ENCODE measurements at regions of chr10 and their contacts with region 1.

Region 1: GRCh38 chr10:93916257-93917063 is 22.7 kb downstream of the SLC35G1 start:
- DNase-seq: no peak
- ATAC-seq: peak in 3 of 4 donors; percentile 63 to 72 (median 66)
- H3K4me3 ChIP-seq: peak overlapping the region in 7 of 12 donors; percentile 4 to 36 (median 14)
- H3K27ac ChIP-seq: no peak overlapping the region
- H3K4me1 ChIP-seq: peaks cover 0 to 13% (median 4%) of the 10 kb centered on the region in 12 donors
- H3K27me3 ChIP-seq: no peaks in the 10 kb centered on the region
- CTCF ChIP-seq: peak in 11 of 12 donors; percentile 33 to 70 (median 56)
- POLR2A ChIP-seq: no peak

Region 2: DNA sequence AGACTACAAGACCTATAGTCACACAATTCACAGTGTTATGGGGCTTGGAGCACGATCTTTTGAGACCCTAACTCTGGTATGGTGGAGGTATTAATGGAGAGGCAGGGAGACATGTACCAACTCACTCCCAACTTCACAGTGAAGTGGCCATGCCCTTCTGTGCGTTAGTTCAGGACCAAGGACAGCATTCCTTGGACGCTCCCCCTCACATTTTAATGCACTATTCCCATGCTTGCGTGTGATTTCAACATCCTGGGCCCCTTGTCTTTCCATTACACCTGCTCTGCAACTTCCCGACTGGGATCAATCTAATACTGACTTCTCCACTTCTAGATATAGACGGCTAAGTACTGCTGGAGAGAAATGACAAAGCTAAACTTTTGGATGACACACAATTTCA is 150.0 kb after region 1 on chr10:
- intact Hi-C with region 1: loop called in 4 of 10 experiments (anchors 10 kb)
- DNase-seq: peak in 1 of 5 donors; percentile 22
- ATAC-seq: peak; percentile 48 to 63 (median 58)
- H3K4me3 ChIP-seq: no peak overlapping the region
- H3K27ac ChIP-seq: no peak overlapping the region
- H3K4me1 ChIP-seq: peaks cover 0 to 23% (median 0%) of the 10 kb centered on the region in 12 donors
- H3K27me3 ChIP-seq: no peaks in the 10 kb centered on the region
- CTCF ChIP-seq: no peak
- POLR2A ChIP-seq: no peak

Region 3: DNA sequence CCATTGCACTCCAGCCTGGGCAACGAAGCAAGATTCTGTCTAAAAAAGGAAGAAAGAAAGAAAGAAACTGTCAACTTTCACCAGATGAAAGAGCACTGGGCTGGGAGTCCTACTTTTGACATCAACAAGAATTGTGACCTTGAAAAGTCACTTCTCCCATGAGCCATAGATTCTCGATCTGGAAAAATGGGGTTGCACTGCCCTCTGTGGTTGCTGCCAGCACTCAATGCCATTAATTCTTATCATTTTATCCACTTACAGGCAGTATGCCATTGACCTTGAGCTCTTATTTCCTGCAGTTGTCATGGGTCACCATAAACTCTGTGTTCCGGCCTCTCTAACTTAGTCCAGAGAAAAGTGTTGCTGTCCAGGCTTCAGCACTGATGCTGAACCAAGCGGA is 309.1 kb after region 1 on chr10:
- intact Hi-C with region 1: loop called in 1 of 10 experiments (anchors 10 kb)
- DNase-seq: no peak
- ATAC-seq: peak in 3 of 4 donors; percentile 44 to 63 (median 61)
- H3K4me3 ChIP-seq: no peak overlapping the region
- H3K27ac ChIP-seq: peak overlapping the region in 5 of 12 donors; percentile 21 to 51 (median 41)
- H3K4me1 ChIP-seq: peaks cover 0 to 35% (median 6%) of the 10 kb centered on the region in 12 donors
- H3K27me3 ChIP-seq: no peaks in the 10 kb centered on the region
- CTCF ChIP-seq: peak in 4 of 12 donors; percentile 28 to 35 (median 33)
- POLR2A ChIP-seq: no peak

Region 4: GRCh38 chr10:94320285-94320914 is 403.9 kb after region 1 on chr10:
- intact Hi-C with region 1: loop called (anchors 1 to 5 kb)
- DNase-seq: peak; percentile 57 to 73 (median 69)
- ATAC-seq: peak in 3 of 4 donors; percentile 43 to 63 (median 51)
- H3K4me3 ChIP-seq: no peak overlapping the region
- H3K27ac ChIP-seq: no peak overlapping the region
- H3K4me1 ChIP-seq: peaks cover 0 to 13% (median 0%) of the 10 kb centered on the region in 12 donors
- H3K27me3 ChIP-seq: no peaks in the 10 kb centered on the region
- CTCF ChIP-seq: peak; percentile 81 to 94 (median 88)
- POLR2A ChIP-seq: no peak

Measured in heart left ventricle (tissue), 16 donors.